Ovary (tissue), 10 donors: ENCODE measurements at regions of chr7 and their contacts with region 1.

Region 1: DNA sequence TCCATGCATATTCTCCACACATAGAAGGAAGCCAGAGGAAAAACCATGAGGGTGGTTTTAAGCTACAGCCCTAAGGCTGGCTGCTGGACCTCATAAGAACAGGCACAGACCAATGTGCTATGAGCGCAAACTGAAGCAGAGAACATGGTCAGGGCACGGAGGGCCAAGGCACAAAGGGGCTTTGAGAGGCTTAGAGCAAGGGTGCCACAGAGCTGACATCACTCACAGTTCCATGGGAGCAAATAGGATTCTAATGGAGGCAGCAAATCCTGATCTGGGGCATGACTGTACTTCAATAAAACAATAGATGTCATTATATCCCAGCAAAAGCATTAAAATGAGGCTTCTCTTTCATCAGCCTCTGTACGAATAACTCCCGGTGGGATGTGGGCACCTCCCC is 162.4 kb downstream of the COBL start:
- DNase-seq: no peak
- H3K4me3 ChIP-seq: no peak overlapping the region
- H3K27ac ChIP-seq: no peak overlapping the region
- H3K4me1 ChIP-seq: no peaks in the 10 kb centered on the region
- H3K27me3 ChIP-seq: no peaks in the 10 kb centered on the region
- CTCF ChIP-seq: no peak
- EP300 ChIP-seq: no peak
- POLR2A ChIP-seq: no peak

Region 2: DNA sequence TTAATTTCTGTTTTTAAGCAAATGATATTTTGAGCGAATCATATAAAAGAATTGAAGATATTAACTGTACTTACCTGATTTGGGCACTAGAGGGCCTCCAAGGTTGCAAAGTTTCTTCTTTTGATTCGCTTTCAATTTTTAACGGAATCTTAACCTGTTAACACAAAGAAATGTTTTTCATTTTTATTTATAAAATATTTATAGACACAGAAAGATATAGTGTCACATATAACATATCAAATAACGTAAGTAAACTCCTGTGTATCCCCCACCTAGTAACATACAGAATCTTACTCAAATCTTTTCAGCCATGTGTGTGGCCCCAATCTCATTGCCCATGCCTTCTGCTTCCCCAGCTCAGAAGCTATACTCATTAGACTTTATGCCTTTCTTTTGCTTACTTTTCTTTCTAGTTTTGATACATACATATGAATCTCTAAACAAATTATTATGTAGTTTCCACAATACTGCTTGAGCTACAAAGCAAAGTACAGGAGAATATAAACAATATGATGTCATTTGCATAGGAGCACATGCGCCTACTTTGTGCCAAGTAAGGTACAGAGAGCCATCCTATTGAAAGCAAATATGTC is 1011.7 kb before region 1 on chr7:
- intact Hi-C with region 1: loop called in 1 of 4 experiments (anchors 10 kb)
- DNase-seq: no peak
- H3K4me3 ChIP-seq: no peak overlapping the region
- H3K27ac ChIP-seq: no peak overlapping the region
- H3K4me1 ChIP-seq: no peaks in the 10 kb centered on the region
- H3K27me3 ChIP-seq: no peaks in the 10 kb centered on the region
- CTCF ChIP-seq: peak; percentile 32 to 65 (median 53)
- EP300 ChIP-seq: no peak
- POLR2A ChIP-seq: no peak

Region 3: GRCh38 chr7:50978633-50979215 is 175.5 kb before region 1 on chr7:
- intact Hi-C with region 1: no loop called
- DNase-seq: no peak
- H3K4me3 ChIP-seq: no peak overlapping the region
- H3K27ac ChIP-seq: no peak overlapping the region
- H3K4me1 ChIP-seq: no peaks in the 10 kb centered on the region
- H3K27me3 ChIP-seq: no peaks in the 10 kb centered on the region
- CTCF ChIP-seq: no peak
- EP300 ChIP-seq: no peak
- POLR2A ChIP-seq: no peak